ENCODE measurements at regions of chr2 and their contacts with region 1.

Region 1: GRCh38 chr2:230987137-230988020 is 8.5 kb upstream of the SPATA3 start:
- DNase-seq: peak; percentile 70 to 89 (median 78)
- H3K4me3 ChIP-seq: peak overlapping the region; percentile 32 to 72 (median 59)
- H3K27ac ChIP-seq: peak overlapping the region in 1 of 59 donors; percentile 46
- H3K27me3 ChIP-seq: peaks cover 0 to 25% (median 8%) of the 10 kb centered on the region in 45 donors
- CTCF ChIP-seq: peak; percentile 87 to 100 (median 97)

Region 2: GRCh38 chr2:230824406-230824978 is 162.9 kb before region 1 on chr2:
- intact Hi-C with region 1: loop called (anchors 2 to 5 kb)
- DNase-seq: peak in 7 of 10 donors; percentile 30 to 59 (median 51)
- H3K4me3 ChIP-seq: peak overlapping the region in 37 of 59 donors; percentile 6 to 57 (median 32)
- H3K27ac ChIP-seq: peak overlapping the region in 1 of 59 donors; percentile 31
- H3K27me3 ChIP-seq: peaks cover 0 to 25% (median 12%) of the 10 kb centered on the region in 45 donors
- CTCF ChIP-seq: peak; percentile 64 to 88 (median 79)

Region 3: GRCh38 chr2:230847883-230848388 is 139.4 kb before region 1 on chr2:
- intact Hi-C with region 1: loop called (anchors 2 to 5 kb)
- DNase-seq: peak; percentile 57 to 91 (median 88)
- H3K4me3 ChIP-seq: peak overlapping the region in 30 of 59 donors; percentile 4 to 46 (median 30)
- H3K27ac ChIP-seq: peak overlapping the region in 11 of 59 donors; percentile 21 to 67 (median 30)
- H3K27me3 ChIP-seq: no peaks in the 10 kb centered on the region
- CTCF ChIP-seq: peak; percentile 72 to 98 (median 92)

Region 4: GRCh38 chr2:230864598-230865306 is 122.6 kb before region 1 on chr2 and contains the start of gene ITM2C:
- intact Hi-C with region 1: loop called in 1 of 2 experiments (anchors 5 kb)
- DNase-seq: peak in 5 of 10 donors; percentile 60 to 82 (median 72)
- H3K4me3 ChIP-seq: peak within 1 kb of the TSS; percentile 46 to 98 (median 86)
- H3K27ac ChIP-seq: peak within 1 kb of the TSS; percentile 15 to 97 (median 86)
- H3K27me3 ChIP-seq: no peaks in the 10 kb centered on the region
- CTCF ChIP-seq: peak in 46 of 56 donors; percentile 10 to 77 (median 46)
- total RNA-seq, gene ITM2C: 391 to 1,107 (median 596) TPM

Region 5: GRCh38 chr2:231037731-231038482 is 50.5 kb after region 1 on chr2:
- intact Hi-C with region 1: loop called in 1 of 2 experiments (anchors 5 kb)
- DNase-seq: peak in 3 of 10 donors; percentile 58 to 83 (median 73)
- H3K4me3 ChIP-seq: peak overlapping the region; percentile 43 to 81 (median 70)
- H3K27ac ChIP-seq: peak overlapping the region in 58 of 59 donors; percentile 75 to 96 (median 91)
- H3K27me3 ChIP-seq: no peaks in the 10 kb centered on the region
- CTCF ChIP-seq: peak in 20 of 56 donors; percentile 11 to 62 (median 30)

Region 6: DNA sequence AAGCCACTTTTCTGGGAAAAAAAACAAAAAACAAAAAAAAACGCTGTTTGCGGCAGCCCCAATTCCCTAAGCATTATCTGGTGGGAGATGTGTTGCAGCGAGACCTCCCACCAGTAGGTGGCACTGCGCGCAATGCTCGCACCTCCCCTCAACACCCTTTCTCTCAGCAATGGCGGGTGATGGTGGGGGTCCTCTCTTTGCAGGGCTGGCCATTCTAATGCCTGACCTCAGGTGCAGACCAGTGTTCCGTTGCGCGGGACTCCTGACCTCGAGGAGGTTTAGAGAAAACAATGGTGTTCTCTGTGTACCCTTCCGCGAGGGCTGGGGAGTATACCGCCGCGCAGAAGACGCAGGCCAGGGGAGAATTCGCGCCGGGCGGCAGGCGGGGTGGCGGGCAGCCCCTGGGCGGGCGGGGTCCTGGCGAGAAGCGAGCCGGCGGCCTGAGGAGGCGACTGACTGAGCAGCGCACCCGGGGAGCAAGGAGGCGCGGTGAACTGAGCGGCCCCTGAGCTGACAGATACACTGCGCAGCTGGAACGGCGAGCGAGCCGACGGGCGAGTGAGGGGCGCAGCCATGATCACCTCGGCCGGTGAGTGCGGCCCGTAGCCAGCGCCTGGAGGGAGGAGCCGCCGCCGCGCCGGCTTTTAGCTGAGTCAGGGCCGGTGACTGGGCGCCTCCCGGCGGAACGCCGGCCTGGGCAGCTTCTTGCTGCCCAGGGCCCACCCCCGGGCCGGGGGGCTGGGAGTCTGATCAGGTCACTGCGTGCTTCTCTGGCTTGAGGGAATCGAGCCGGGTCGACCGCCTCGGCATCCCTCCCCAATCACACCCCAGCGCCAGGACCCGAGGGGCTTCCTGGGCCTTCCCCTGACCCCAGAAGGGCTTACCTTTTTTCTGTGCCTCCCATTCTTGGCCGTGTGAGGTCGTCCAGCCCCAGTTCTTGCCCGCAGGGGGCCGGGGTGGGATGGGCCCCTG is 69.4 kb after region 1 on chr2 and contains the start of gene PSMD1:
- intact Hi-C with region 1: loop called in 1 of 2 experiments (anchors 5 kb)
- DNase-seq: peak; percentile 82 to 94 (median 90)
- H3K4me3 ChIP-seq: peak within 1 kb of the TSS; percentile 63 to 100 (median 96)
- H3K27ac ChIP-seq: peak within 1 kb of the TSS; percentile 87 to 100 (median 98)
- H3K27me3 ChIP-seq: no peaks in the 10 kb centered on the region
- CTCF ChIP-seq: peak; percentile 86 to 99 (median 95)
- total RNA-seq, gene PSMD1: 86.5 to 175 (median 121) TPM

Measured in dorsolateral prefrontal cortex (tissue), 120 donors.